Endothelial cell of umbilical vein (primary cell): ENCODE measurements at regions of chr13 and their contacts with region 1.

Region 1: GRCh38 chr13:40190641-40191100 is 475.8 kb downstream of the FOXO1 start:
- DNase-seq: peak; percentile 89
- H3K4me3 ChIP-seq: no peak overlapping the region
- H3K27ac ChIP-seq: peak overlapping the region; percentile 85
- H3K4me1 ChIP-seq: peaks cover 53% of the 10 kb centered on the region
- H3K27me3 ChIP-seq: no peaks in the 10 kb centered on the region
- CTCF ChIP-seq: no peak
- POLR2A ChIP-seq: no peak

Region 2: GRCh38 chr13:39892721-39893685 is 297.7 kb before region 1 on chr13:
- CTCF ChIA-PET with region 1: no interaction called
- POLR2A ChIA-PET with region 1: no interaction called
- dilution Hi-C with region 1: no loop called
- intact Hi-C with region 1: loop called (anchors 1 kb)
- DNase-seq: peak; percentile 95
- H3K4me3 ChIP-seq: peak overlapping the region in 1 of 3 experiments; percentile 6
- H3K27ac ChIP-seq: peak overlapping the region; percentile 86
- H3K4me1 ChIP-seq: peaks cover 52% of the 10 kb centered on the region
- H3K27me3 ChIP-seq: no peaks in the 10 kb centered on the region
- CTCF ChIP-seq: no peak
- POLR2A ChIP-seq: no peak

Region 3: GRCh38 chr13:39959497-39960144 is 231.1 kb before region 1 on chr13:
- CTCF ChIA-PET with region 1: no interaction called
- POLR2A ChIA-PET with region 1: no interaction called
- dilution Hi-C with region 1: no loop called
- intact Hi-C with region 1: no loop called
- DNase-seq: no peak
- H3K4me3 ChIP-seq: no peak overlapping the region
- H3K27ac ChIP-seq: no peak overlapping the region
- H3K4me1 ChIP-seq: peaks cover 10% of the 10 kb centered on the region
- H3K27me3 ChIP-seq: no peaks in the 10 kb centered on the region
- CTCF ChIP-seq: no peak
- POLR2A ChIP-seq: no peak

Region 4: GRCh38 chr13:40116008-40116407 is 74.7 kb before region 1 on chr13:
- CTCF ChIA-PET with region 1: no interaction called
- POLR2A ChIA-PET with region 1: no interaction called
- dilution Hi-C with region 1: no loop called
- intact Hi-C with region 1: loop called (anchors 1 kb)
- DNase-seq: peak; percentile 98
- H3K4me3 ChIP-seq: no peak overlapping the region
- H3K27ac ChIP-seq: peak overlapping the region; percentile 93
- H3K4me1 ChIP-seq: peaks cover 17% of the 10 kb centered on the region
- H3K27me3 ChIP-seq: no peaks in the 10 kb centered on the region
- CTCF ChIP-seq: no peak
- POLR2A ChIP-seq: no peak

Region 5: DNA sequence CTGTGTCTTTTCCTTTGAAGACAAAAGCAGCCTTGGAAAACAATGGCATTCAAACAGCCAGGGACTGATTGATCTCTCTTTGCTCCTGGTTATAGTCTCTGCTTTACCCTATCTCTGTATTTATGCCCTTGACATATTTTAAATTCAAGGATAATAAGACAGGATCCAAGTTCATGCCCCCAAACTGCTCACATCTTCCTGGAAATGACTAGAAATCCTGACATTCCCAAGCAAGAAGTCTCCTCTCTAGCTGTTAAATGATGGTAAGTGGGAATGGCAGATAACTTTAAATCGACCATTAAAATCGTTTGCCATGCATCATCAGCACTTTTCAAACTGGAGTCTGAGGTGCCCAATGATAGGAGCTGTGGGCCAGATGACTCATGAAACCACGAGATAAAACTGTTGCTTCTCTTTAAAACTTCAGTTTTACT is 40.2 kb after region 1 on chr13:
- CTCF ChIA-PET with region 1: no interaction called
- POLR2A ChIA-PET with region 1: no interaction called
- dilution Hi-C with region 1: no loop called
- intact Hi-C with region 1: loop called (anchors 1 kb)
- DNase-seq: peak; percentile 74
- H3K4me3 ChIP-seq: no peak overlapping the region
- H3K27ac ChIP-seq: peak overlapping the region; percentile 3
- H3K4me1 ChIP-seq: peaks cover 12% of the 10 kb centered on the region
- H3K27me3 ChIP-seq: no peaks in the 10 kb centered on the region
- CTCF ChIP-seq: no peak
- POLR2A ChIP-seq: no peak

Region 6: DNA sequence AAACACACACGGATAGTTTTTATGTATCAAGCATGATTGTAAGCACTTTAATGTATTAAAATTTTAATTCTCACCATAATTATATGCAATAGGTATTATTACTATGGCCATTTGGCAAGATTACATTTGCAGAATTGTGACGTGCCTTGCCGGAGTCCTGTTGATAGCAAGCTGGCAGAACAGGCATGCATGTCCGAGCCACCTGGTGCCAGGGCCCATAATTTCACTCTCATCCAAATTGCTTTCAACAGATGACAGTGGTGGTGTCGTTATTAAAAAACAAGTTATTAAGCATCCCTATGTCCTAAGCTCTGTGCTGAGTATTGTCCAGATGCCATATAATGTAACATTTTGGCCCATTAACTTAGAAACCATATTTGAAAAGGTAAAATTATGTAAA is 101.4 kb after region 1 on chr13:
- CTCF ChIA-PET with region 1: no interaction called
- POLR2A ChIA-PET with region 1: no interaction called
- dilution Hi-C with region 1: no loop called
- intact Hi-C with region 1: no loop called
- DNase-seq: no peak
- H3K4me3 ChIP-seq: no peak overlapping the region
- H3K27ac ChIP-seq: no peak overlapping the region
- H3K4me1 ChIP-seq: no peaks in the 10 kb centered on the region
- H3K27me3 ChIP-seq: no peaks in the 10 kb centered on the region
- CTCF ChIP-seq: no peak
- POLR2A ChIP-seq: no peak

Region 7: DNA sequence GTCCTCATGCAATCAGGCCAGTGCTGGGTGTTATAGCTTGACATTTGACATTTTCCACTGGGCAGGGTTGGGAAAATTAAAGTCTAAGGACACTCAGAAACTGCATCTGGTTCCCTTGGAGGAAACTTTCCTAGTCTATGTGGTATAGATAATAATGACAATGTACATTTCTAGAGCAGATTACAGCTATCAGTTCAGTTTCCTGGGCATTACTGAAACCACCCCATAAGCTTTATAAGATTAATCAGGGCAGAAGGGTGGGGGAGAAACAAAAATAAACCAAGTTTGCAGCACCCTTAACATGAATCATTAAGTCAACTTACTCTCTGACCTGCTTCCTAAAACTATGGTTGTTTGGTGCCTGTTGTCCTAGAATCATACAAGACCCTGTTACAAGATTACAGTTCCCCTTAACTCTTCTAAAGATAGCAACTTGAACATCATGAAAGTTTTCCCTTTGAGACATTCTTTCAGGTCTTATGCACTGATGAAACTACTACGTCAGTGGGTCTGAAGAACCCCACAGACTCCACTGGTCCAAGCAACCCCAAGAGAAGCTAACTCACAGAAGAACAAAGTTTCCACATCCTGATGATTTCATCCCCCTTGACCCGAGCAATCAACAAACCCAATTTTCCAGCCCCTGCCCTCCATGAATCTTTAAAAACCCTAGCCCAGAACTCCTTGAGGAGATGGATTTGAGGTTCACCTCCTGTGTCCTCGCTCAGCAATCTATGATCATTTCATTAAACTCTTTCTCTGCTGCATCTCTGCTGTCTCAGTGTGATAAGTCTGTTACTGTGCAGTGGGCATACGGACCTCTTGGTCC is 139.2 kb after region 1 on chr13:
- CTCF ChIA-PET with region 1: no interaction called
- POLR2A ChIA-PET with region 1: no interaction called
- dilution Hi-C with region 1: no loop called
- intact Hi-C with region 1: no loop called
- DNase-seq: no peak
- H3K4me3 ChIP-seq: no peak overlapping the region
- H3K27ac ChIP-seq: no peak overlapping the region
- H3K4me1 ChIP-seq: peaks cover 10% of the 10 kb centered on the region
- H3K27me3 ChIP-seq: no peaks in the 10 kb centered on the region
- CTCF ChIP-seq: no peak
- POLR2A ChIP-seq: no peak

Region 8: DNA sequence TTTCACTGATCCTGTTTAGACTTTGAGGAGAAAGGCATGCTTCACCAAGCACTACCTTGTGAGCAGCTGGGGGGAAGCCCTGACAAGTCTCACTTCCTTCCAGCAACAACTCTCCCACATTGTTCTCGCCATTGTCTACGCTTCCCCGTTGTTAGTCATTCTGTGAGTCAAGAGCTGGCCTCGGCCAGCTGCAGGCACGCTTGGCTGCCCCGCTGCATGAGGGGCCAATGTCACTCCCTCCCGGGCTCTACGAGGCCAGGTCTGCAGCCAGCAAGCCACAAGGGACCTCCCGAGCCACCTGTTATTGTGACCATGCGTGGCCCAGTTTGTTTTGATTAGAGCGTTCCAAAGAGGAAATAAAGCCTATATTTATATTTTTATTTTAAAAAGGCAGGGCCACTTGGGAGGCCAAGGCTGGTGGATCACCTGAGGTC is 254.9 kb after region 1 on chr13:
- CTCF ChIA-PET with region 1: no interaction called
- POLR2A ChIA-PET with region 1: interaction called, 4 read pairs
- dilution Hi-C with region 1: no loop called
- intact Hi-C with region 1: loop called (anchors 1 kb)
- DNase-seq: peak; percentile 99
- H3K4me3 ChIP-seq: no peak overlapping the region
- H3K27ac ChIP-seq: peak overlapping the region; percentile 99
- H3K4me1 ChIP-seq: peaks cover 36% of the 10 kb centered on the region
- H3K27me3 ChIP-seq: no peaks in the 10 kb centered on the region
- CTCF ChIP-seq: no peak
- POLR2A ChIP-seq: peak; percentile 42

Region 9: DNA sequence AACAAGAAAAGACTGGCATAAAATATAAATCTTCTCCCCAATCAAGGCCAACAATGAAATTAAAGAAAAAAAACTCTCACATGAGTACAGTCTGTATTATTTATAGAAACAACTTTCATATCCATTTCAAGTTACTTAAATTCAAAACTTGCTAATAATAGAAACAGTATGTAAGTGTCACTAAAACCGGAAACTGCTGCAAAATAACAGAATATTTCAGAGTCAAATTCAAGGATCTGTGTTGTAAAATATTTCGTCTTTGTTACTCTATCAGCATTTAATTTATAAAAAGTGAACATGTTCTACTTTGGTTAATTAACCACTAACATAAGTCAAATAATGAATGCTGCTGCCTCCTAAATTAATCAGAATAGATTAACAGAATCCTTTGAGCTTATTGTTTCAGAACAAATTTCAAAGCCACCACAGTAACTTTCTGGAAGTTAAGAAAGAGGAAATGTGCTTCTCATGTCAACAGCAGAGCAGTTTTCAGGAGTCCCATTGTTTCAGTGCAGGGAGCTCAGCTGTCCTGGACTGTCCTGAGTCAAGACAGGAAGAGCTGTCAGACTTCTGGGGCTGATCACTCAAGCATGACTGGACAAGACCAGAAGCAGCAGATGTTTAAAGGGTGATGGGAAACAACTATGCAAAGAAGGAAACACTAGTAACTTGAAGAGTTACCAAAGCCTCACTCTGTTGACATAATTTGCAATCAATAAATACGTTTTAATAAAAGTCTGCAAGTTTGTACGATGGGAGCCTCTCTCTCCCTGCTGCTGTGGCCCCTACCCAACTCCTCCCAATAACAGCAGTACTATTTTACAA is 398.8 kb after region 1 on chr13:
- CTCF ChIA-PET with region 1: no interaction called
- POLR2A ChIA-PET with region 1: no interaction called
- dilution Hi-C with region 1: no loop called
- intact Hi-C with region 1: loop called (anchors 1 kb)
- DNase-seq: peak; percentile 94
- H3K4me3 ChIP-seq: peak overlapping the region in 1 of 3 experiments; percentile 14
- H3K27ac ChIP-seq: peak overlapping the region; percentile 87
- H3K4me1 ChIP-seq: peaks cover 69% of the 10 kb centered on the region
- H3K27me3 ChIP-seq: no peaks in the 10 kb centered on the region
- CTCF ChIP-seq: no peak
- POLR2A ChIP-seq: peak; percentile 57

Region 10: DNA sequence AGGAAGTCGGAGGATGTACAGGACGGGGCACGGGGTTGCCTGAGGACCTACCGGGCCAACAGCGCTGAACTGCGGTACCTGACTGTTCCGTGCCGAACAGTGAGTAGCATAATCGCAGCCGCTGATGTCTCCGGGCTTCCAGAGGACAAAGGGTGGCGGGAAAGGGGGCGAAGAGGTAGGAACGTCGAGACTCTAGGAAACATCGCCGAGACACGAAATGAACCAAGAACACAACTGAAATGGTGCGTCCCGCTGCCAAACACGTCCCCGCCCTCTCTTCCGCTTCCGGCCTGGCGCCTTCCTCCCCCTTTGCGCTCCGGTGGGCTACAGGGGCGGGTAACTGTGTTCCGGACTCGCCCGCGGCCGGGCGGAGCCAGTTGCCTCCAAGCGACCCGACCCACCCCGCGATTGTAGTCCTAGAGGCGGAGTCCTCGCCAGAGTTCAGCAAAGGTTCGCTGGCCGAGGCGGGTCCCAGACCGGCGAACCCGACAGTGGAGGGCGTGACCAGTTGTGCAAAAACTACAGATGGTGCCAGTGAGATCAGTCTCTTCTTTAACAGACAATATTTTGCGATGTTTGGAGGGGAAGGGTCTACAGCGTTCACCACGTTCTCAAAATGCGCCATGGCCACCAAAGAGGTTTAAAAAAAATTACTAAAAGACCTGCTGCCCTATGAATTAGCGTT is 580.4 kb after region 1 on chr13 and contains the start of gene MRPS31:
- CTCF ChIA-PET with region 1: no interaction called
- POLR2A ChIA-PET with region 1: no interaction called
- dilution Hi-C with region 1: no loop called
- intact Hi-C with region 1: no loop called
- DNase-seq: peak; percentile 93
- H3K4me3 ChIP-seq: peak within 1 kb of the TSS; percentile 71 to 91 (median 77)
- H3K27ac ChIP-seq: peak within 1 kb of the TSS; percentile 75
- H3K4me1 ChIP-seq: peaks cover 6% of the 10 kb centered on the region
- H3K27me3 ChIP-seq: no peaks in the 10 kb centered on the region
- CTCF ChIP-seq: no peak
- POLR2A ChIP-seq: peak; percentile 88
- total RNA-seq, gene MRPS31: 17.8 and 19.9 TPM in 2 replicates